Panc1 (cell line): ENCODE measurements at regions of chr10 and their contacts with region 1.

Region 1: GRCh38 chr10:42866115-42866995 is 83.8 kb downstream of the BMS1 start:
- DNase-seq: no peak
- ATAC-seq: peak; percentile 100
- H3K4me3 ChIP-seq: peak overlapping the region; percentile 21 to 56
- H3K27ac ChIP-seq: no peak overlapping the region; the same call in 1 of the 2 replicates
- H3K4me1 ChIP-seq: peaks cover 2% of the 10 kb centered on the region; the same call in 1 of the 2 replicates
- H3K27me3 ChIP-seq: peaks cover 2% of the 10 kb centered on the region; the same call in 1 of the 2 replicates
- CTCF ChIP-seq: peak; percentile 91

Region 2: DNA sequence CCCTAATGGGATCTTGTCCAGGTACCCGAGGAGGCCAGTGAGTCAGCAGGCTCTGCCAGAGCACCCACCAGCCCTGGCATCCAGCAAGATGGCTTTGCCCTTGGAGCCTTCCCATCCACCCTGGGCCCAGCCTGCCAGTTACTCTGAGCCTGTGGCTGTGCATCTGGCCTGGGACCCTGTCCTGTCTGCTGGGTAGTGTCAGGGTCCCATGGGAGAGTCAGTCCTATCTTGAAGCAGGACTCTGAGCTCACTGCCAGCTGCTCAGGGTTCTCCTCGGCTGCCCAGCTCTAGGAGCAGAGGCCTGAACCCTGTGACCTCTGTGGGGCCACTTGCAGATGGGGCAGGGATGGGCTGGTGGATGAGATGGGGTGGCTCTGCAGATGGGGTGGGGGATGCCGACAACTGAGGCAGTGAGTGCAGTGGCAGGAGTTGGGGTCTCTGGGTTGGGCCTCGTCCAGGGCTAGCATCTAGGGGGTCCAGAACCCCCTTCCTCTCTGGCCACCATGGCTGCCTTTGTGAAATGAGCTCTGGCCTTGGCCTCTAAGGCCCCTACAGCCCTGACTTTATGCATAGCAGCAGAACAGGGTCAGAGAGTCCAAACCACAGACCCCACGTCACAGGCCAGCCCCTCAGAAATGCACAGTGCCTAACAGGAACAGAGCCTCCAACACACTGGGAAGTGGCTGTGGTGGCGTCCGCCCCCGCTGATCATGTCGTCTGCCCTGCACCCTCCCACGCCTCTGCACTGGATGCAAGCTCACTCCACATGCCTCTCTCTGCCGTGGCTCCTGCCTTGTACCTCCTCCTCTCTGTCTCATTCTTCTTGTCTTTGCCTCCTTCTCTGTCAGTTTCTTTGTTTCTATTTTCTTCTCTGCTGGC is 122.4 kb after region 1 on chr10:
- CTCF ChIA-PET with region 1: no interaction called
- POLR2A ChIA-PET with region 1: no interaction called
- in situ Hi-C with region 1: no loop called
- intact Hi-C with region 1: loop called (anchors 10 kb)
- DNase-seq: no peak
- ATAC-seq: no peak; the same call in 1 of the 2 replicates
- H3K4me3 ChIP-seq: no peak overlapping the region
- H3K27ac ChIP-seq: no peak overlapping the region
- H3K4me1 ChIP-seq: no peaks in the 10 kb centered on the region
- H3K27me3 ChIP-seq: no peaks in the 10 kb centered on the region
- CTCF ChIP-seq: no peak

Region 3: DNA sequence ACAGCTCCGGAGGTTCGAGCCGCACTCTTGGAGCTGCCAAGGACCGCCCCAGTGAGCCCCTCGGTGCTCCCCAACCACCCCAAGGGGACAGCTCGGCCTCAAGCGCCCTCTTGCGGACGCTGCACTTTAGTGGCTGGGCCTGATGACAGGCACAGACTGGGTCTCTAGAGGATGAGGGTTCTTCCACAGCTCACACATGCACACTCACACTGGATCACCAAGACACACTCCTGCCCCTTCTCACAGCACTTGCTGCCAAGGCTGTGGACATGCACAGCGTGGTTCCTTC is 212.6 kb after region 1 on chr10:
- CTCF ChIA-PET with region 1: interaction called, 6 read pairs
- POLR2A ChIA-PET with region 1: interaction called, 3 read pairs
- in situ Hi-C with region 1: no loop called
- intact Hi-C with region 1: loop called (anchors 1 kb)
- DNase-seq: no peak
- ATAC-seq: peak; percentile 46
- H3K4me3 ChIP-seq: peak overlapping the region in 1 of 2 experiments; percentile 55; a peak in 2 of 4 replicates
- H3K27ac ChIP-seq: no peak overlapping the region
- H3K4me1 ChIP-seq: peaks cover 11% of the 10 kb centered on the region
- H3K27me3 ChIP-seq: no peaks in the 10 kb centered on the region
- CTCF ChIP-seq: peak; percentile 96

Region 4: DNA sequence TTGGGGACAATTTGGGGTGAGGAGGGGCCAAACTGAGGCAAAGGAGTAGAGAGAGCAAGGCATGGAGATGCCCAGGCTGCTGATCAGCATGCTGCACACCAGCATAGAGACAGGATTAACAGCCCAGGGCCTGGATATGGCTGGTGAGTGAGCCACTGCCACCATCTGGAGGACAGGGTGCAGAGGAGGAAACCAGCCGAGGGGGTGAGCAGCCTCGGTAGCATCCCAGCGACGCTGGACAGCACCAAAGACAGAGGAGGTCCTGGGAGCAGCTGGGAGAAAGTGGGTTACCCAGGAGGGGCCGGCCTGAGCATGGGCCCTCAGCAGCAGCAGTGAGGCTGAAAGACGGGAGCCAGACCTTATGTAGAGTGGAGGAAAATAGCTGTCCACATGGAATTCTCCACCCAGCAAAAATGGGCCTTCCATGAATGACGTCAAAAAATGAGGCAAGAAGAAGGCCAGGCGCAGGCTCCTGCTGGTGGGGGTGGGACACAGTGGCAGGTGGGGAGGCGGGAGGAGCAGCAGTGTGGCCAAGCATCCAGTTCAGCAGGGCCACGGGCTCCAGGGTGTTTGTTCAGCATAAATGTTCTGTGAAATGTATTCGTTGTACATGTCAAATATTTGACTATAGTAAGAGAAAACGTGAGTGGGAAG is 227.2 kb after region 1 on chr10:
- CTCF ChIA-PET with region 1: no interaction called
- POLR2A ChIA-PET with region 1: no interaction called
- in situ Hi-C with region 1: no loop called
- intact Hi-C with region 1: loop called (anchors 5 kb)
- DNase-seq: no peak
- ATAC-seq: peak; percentile 86
- H3K4me3 ChIP-seq: no peak overlapping the region
- H3K27ac ChIP-seq: no peak overlapping the region
- H3K4me1 ChIP-seq: peaks cover 5% of the 10 kb centered on the region; the same call in 1 of the 2 replicates
- H3K27me3 ChIP-seq: no peaks in the 10 kb centered on the region
- CTCF ChIP-seq: no peak

Region 5: GRCh38 chr10:43105102-43105785 is 238.9 kb after region 1 on chr10:
- CTCF ChIA-PET with region 1: no interaction called
- POLR2A ChIA-PET with region 1: no interaction called
- in situ Hi-C with region 1: no loop called
- intact Hi-C with region 1: loop called (anchors 2 kb)
- DNase-seq: peak; percentile 45
- ATAC-seq: peak; percentile 91
- H3K4me3 ChIP-seq: peak overlapping the region; percentile 55 to 68
- H3K27ac ChIP-seq: peak overlapping the region; percentile 75
- H3K4me1 ChIP-seq: peaks cover 16% of the 10 kb centered on the region
- H3K27me3 ChIP-seq: no peaks in the 10 kb centered on the region
- CTCF ChIP-seq: peak; percentile 100